ENCODE measurements at regions of chr13 and their contacts with region 1.

Region 1: GRCh38 chr13:21723807-21724505 is 53.1 kb downstream of the FGF9 start:
- DNase-seq: no peak
- ATAC-seq: no peak
- H3K4me3 ChIP-seq: no peak overlapping the region
- H3K27ac ChIP-seq: no peak overlapping the region
- H3K4me1 ChIP-seq: no peaks in the 10 kb centered on the region
- H3K27me3 ChIP-seq: no peaks in the 10 kb centered on the region
- CTCF ChIP-seq: no peak
- EP300 ChIP-seq: no peak
- POLR2A ChIP-seq: no peak
- RAD21 ChIP-seq: no peak

Region 2: DNA sequence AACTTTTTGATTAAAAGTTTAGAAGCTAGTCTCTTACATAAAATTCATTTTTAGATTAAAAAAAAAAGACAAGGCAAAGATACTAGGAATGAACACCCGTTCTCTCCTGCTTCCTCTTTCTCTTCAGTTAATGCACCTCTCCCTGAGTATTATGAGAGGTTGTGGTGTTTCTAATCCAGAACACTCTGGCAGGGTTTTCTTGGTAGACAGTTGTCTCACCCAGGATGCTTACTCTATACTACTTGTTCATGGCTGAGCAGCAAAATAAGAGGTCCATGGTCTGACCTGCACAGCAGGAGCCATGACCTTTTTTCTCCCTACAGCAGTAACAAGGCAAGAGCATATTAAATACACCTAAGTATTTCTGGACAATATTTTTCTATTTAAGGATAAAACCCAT is 182.0 kb before region 1 on chr13:
- CTCF ChIA-PET with region 1: no interaction called
- POLR2A ChIA-PET with region 1: no interaction called
- RAD21 ChIA-PET with region 1: no interaction called
- SMC1A ChIA-PET with region 1: no interaction called
- in situ Hi-C with region 1: no loop called
- intact Hi-C with region 1: no loop called
- DNase-seq: no peak
- ATAC-seq: peak; percentile 72
- H3K4me3 ChIP-seq: no peak overlapping the region
- H3K27ac ChIP-seq: no peak overlapping the region; the same call in 1 of the 2 replicates
- H3K4me1 ChIP-seq: peaks cover 8% of the 10 kb centered on the region; the same call in 1 of the 2 replicates
- H3K27me3 ChIP-seq: no peaks in the 10 kb centered on the region
- CTCF ChIP-seq: no peak
- EP300 ChIP-seq: no peak
- POLR2A ChIP-seq: no peak
- RAD21 ChIP-seq: no peak

Region 3: DNA sequence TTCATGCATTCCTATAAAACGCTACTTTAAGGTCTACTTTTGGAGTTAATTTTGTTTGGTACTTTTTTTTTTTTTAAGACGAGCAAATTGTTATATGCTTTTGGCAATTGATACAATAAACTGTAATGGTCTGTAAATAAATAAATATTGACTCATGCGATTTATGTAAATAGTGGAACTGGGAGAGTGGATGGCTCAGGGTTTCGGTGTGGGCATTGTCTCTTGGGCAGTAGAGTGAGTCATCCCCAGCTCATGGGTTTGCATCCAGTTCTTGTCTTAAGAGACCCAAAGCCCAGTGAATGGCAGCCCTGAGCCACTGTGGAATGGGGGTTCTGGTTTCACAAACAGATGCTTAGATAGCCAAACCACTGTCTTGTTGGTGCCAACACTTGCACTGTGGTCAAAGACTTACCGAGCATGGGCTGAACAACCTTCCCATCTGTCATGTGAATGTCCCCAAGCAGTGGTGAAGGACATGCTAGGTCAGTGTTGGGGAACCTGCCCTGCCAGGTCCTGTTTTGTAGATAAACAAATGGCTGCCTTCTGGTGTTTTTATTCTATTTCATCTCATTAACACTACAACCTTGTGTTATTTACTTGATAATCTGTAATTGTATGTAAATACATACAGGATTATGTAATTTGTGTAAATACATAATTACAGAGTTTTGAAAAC is 20.0 kb before region 1 on chr13:
- CTCF ChIA-PET with region 1: no interaction called
- POLR2A ChIA-PET with region 1: no interaction called
- RAD21 ChIA-PET with region 1: no interaction called
- SMC1A ChIA-PET with region 1: no interaction called
- in situ Hi-C with region 1: no loop called
- intact Hi-C with region 1: loop called (anchors 2 kb)
- DNase-seq: no peak
- ATAC-seq: no peak
- H3K4me3 ChIP-seq: no peak overlapping the region
- H3K27ac ChIP-seq: no peak overlapping the region
- H3K4me1 ChIP-seq: no peaks in the 10 kb centered on the region
- H3K27me3 ChIP-seq: no peaks in the 10 kb centered on the region; a peak in 1 of 4 replicates
- CTCF ChIP-seq: no peak
- EP300 ChIP-seq: no peak
- POLR2A ChIP-seq: no peak
- RAD21 ChIP-seq: no peak

Measured in GM12878 (cell line).